Activated CD4-positive, alpha-beta T cell treated with anti-CD3 and anti-CD28 coated beads, Interleukin-2, amount 10 ng/mL, durations not matched to agents 7 days and 5 days (primary cell): ENCODE measurements at regions of chr15 and their contacts with region 1.

Region 1: DNA sequence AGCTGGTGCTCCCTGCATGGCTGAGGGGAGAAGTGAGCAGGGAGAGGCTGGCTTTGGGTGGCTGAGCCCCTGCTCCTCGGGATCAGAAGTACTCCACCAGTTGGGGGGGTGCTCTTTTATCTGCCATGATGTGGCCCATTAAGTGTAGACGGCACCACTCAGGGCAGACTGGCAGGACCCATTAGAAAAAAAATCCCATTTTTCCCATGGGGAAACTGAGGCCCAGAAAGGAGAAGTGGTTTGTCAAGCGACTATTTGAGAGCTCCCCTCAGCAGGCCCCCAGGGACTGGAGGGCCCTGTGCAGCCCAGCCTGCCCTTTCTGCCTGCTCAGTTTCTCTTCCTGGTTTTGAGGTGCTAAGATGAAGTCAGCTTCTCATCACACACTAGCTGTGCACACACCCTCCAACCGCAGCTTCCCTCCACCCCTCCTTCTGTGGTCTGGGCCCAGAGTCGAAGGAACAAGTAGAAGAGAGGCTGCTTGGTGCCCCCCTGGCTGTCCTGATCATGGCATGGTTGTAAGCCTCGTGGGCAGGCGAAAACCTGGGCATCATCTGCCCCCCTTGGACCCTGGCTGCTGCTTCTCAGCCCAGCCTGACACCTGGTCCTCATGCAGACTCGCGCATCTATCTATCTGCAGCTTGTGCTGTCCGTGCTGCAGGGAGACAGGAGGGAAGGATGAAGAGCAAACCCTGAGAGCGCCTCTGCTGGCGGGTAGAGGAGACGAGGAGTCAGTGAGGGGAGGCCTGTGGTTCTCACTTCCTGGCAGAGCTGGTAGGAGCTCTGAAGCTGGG is 5.6 kb downstream of the CSK start:
- DNase-seq: peak; percentile 95
- H3K4me3 Mint-ChIP-seq: peak overlapping the region; percentile 88
- H3K27ac Mint-ChIP-seq: peak overlapping the region; percentile 98
- H3K4me1 Mint-ChIP-seq: peaks cover 66% of the 10 kb centered on the region
- H3K27me3 Mint-ChIP-seq: no peaks in the 10 kb centered on the region

Region 2: GRCh38 chr15:74799856-74800547 is 12.6 kb after region 1 on chr15:
- CTCF ChIA-PET with region 1: interaction called, 930 read pairs
- POLR2A ChIA-PET with region 1: interaction called, 3 read pairs
- DNase-seq: peak; percentile 86
- H3K4me3 Mint-ChIP-seq: no peak overlapping the region
- H3K27ac Mint-ChIP-seq: peak overlapping the region; percentile 80
- H3K4me1 Mint-ChIP-seq: peaks cover 55% of the 10 kb centered on the region
- H3K27me3 Mint-ChIP-seq: no peaks in the 10 kb centered on the region

Region 3: DNA sequence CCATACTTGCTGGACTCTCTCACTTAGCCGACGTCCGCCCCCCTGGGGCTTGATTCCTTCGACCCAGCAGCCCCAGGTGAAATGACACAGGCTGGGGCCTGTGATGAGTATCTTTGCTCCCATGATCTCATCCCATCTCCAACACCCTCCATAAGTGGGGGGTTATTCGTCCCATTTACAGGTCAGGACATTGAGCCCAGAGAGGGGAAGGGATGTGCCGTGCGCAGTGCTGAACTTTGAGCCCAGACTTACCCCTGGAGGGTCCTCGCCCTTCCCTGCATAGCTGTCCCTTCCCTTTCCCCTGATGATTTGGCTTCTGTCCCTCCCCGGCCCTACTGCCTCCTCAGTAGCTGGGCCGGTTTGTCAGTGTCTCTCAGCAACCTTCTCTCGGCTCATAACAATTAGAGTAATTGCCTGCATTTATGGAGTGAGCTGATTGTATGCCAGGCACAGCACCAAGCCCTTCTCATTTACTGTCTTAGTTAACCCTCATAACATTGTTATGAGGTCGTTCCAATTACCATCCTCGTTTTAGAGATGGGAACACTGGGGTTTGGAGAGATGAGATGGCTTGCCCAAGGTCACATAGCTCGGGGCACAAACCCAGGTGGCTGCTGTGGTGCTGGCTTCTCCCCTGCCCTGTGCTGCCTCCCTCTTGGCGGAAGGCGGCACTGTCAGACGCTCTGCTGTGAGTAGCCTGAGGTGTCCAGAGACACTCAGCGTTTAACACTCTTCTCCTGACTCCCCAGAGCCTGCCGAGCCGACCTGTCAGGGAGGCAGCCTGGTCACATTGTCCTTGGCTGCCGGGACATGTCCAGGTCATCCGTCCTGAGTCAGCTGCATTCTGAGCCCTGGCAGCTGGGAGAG is 29.6 kb after region 1 on chr15:
- CTCF ChIA-PET with region 1: interaction called, 930 read pairs
- POLR2A ChIA-PET with region 1: no interaction called
- DNase-seq: no peak
- H3K4me3 Mint-ChIP-seq: no peak overlapping the region
- H3K27ac Mint-ChIP-seq: peak overlapping the region; percentile 66
- H3K4me1 Mint-ChIP-seq: peaks cover 9% of the 10 kb centered on the region
- H3K27me3 Mint-ChIP-seq: peaks cover 2% of the 10 kb centered on the region

Region 4: GRCh38 chr15:74842581-74843444 is 55.4 kb after region 1 on chr15 and contains the start of gene ULK3:
- CTCF ChIA-PET with region 1: interaction called, 23 read pairs
- POLR2A ChIA-PET with region 1: no interaction called
- DNase-seq: peak; percentile 93
- H3K4me3 Mint-ChIP-seq: peak within 1 kb of the TSS; percentile 92
- H3K27ac Mint-ChIP-seq: peak within 1 kb of the TSS; percentile 95
- H3K4me1 Mint-ChIP-seq: peaks cover 58% of the 10 kb centered on the region
- H3K27me3 Mint-ChIP-seq: no peaks in the 10 kb centered on the region
- total RNA-seq, gene ULK3: 56.6 to 66.4 TPM

Region 5: GRCh38 chr15:74869726-74870407 is 82.4 kb after region 1 on chr15:
- CTCF ChIA-PET with region 1: interaction called, 11 read pairs
- POLR2A ChIA-PET with region 1: interaction called, 3 read pairs
- DNase-seq: peak; percentile 57
- H3K4me3 Mint-ChIP-seq: peak overlapping the region; percentile 94
- H3K27ac Mint-ChIP-seq: peak overlapping the region; percentile 90
- H3K4me1 Mint-ChIP-seq: peaks cover 78% of the 10 kb centered on the region
- H3K27me3 Mint-ChIP-seq: no peaks in the 10 kb centered on the region